ENCODE measurements at regions of chr17 and their contacts with region 1.

Region 1: DNA sequence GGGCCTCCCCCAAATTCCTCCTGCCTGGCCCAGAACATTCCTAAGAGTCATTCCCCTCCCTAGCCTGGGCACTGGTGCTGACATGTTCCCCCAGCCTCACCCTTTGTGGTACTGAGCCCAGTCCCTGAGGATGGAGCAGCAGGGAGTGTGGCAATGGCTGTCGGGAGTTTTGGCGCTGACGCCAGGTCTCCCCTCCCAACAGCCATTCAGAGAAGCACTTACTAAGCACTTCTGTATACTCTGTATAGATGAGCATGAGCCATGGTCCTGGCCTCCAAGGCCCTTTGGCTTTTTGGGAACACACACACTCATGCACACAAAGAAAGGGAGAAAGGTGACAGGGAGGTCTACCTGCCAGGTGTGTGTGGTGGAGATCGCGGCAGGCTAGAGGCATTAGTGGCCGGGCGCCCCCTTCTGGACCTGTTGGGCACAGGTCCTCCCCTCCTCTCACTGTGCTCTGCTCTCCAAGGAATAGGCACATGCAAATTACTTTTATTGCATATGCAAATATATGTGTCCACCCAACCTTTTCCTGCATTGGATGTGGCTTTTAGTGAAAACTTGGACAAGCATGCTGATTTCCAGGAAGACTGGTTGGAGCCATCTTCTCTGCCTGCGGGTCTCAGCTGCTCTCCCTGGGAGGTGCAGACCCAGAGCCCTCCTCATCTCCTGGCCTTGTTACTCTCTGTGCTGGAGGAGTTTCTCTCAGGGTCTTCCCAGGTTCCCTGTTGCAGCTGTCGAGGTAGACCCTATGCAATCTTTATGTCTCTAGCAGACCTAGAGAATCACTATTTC is 17.4 kb upstream of the C17orf107 start:
- DNase-seq: peak; percentile 90
- H3K4me3 Mint-ChIP-seq: no peak overlapping the region
- H3K27ac Mint-ChIP-seq: no peak overlapping the region
- H3K4me1 Mint-ChIP-seq: peaks cover 3% of the 10 kb centered on the region
- H3K27me3 Mint-ChIP-seq: no peaks in the 10 kb centered on the region

Region 2: DNA sequence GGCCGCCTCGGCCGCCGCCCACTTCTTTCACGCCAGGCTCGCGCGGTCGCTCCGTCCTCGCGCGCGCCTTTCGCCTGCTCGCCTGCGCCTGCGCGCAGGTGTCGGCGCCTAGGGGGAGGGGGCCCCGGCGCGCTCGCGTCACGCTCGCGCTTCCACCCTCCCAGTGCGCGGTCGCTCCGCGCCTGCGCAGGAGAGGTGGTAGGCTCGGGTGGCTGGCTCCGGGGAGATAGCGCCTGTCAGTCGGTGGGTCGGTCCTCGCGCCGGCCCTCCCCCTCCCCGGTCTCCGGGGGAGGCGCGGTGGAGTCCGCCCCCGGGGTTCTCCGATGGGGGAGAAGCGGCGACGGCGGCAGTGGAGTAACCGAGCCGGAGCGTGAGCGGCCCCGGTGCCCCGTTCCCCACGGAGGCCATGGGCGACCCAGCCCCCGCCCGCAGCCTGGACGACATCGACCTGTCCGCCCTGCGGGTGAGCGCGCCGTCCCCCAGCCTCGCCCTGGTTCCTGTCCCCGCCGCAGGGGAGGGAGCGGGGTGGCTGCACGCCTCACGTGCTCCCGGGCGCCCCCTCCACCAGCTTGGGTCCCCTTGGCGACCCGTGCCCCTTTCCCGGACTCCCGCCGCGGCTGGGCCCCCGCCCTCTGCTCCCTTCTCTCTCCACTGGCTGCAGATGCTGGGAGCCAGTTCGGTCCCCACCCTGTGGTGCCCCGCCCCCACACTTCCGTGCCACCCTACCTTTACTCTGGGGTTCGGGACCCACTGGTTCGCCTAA is 48.6 kb before region 1 on chr17 and contains the start of gene MINK1:
- intact Hi-C with region 1: loop called (anchors 10 kb)
- DNase-seq: peak; percentile 97
- H3K4me3 Mint-ChIP-seq: peak within 1 kb of the TSS; percentile 90
- H3K27ac Mint-ChIP-seq: peak within 1 kb of the TSS; percentile 95
- H3K4me1 Mint-ChIP-seq: peaks cover 33% of the 10 kb centered on the region
- H3K27me3 Mint-ChIP-seq: peaks cover 2% of the 10 kb centered on the region
- total RNA-seq, gene MINK1: 56.1 and 59.7 TPM in 2 replicates

Measured in activated CD4-positive, alpha-beta T cell treated with anti-CD3 and anti-CD28 coated beads, Interleukin-2, amount 10 ng/mL, durations not matched to agents 24 days and 14 days (primary cell).